GM12878 (cell line): ENCODE measurements at regions of chr11 and their contacts with region 1.

Region 1: DNA sequence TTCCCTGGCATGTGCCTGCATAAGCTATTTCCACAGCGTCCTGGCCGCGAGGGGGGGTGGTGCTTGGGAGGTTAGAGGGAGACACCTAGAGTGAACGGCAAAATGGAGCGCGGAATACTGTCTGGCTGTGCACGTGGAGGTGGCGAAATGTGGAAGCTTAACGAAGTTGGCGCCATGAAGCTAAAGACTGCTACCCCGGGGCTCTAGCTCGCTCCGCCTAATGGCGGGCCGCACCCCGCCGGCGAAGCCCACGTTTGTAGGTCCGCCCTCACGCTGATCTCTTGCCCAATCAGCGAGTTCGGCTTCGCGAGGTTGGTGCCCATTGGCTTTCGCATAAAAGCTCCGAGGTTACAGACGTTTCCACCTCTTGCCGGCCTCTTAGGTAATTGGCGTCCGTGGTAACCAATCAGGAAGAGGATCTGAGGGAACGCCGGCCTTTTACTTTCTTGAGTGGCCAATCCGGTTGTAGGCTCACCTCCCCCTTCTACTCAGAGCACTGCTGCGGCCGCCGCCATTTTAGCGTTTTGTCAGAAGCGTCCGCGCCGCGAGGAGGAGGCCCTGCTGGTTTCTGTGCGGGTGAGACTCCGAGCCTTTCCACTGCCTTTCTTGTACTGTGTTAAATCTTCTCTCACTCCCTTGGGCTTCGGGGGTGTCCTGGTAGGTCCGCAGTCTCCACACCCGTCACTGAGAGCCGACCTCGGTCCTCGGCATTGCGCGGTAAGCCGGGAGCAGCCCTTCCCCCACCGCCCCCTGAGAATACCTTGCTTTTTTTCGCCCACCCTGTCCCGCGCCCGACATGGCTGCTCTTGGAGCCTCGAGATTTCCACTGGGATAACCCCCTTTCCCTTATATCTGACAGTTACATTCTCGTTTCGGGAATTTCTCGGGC is at the start of gene RBM4:
- DNase-seq: peak; percentile 98
- ATAC-seq: peak; percentile 98
- H3K4me3 ChIP-seq: peak within 1 kb of the TSS; percentile 90
- H3K27ac ChIP-seq: peak within 1 kb of the TSS; percentile 92
- H3K4me1 ChIP-seq: peaks cover 17% of the 10 kb centered on the region
- H3K27me3 ChIP-seq: no peaks in the 10 kb centered on the region
- CTCF ChIP-seq: peak in 2 of 3 experiments; percentile 4 to 10; a peak in 1 of 6 replicates
- EP300 ChIP-seq: no peak
- POLR2A ChIP-seq: peak; percentile 93
- RAD21 ChIP-seq: no peak
- polyA plus RNA-seq, gene RBM4: 163 to 224 TPM

Region 2: DNA sequence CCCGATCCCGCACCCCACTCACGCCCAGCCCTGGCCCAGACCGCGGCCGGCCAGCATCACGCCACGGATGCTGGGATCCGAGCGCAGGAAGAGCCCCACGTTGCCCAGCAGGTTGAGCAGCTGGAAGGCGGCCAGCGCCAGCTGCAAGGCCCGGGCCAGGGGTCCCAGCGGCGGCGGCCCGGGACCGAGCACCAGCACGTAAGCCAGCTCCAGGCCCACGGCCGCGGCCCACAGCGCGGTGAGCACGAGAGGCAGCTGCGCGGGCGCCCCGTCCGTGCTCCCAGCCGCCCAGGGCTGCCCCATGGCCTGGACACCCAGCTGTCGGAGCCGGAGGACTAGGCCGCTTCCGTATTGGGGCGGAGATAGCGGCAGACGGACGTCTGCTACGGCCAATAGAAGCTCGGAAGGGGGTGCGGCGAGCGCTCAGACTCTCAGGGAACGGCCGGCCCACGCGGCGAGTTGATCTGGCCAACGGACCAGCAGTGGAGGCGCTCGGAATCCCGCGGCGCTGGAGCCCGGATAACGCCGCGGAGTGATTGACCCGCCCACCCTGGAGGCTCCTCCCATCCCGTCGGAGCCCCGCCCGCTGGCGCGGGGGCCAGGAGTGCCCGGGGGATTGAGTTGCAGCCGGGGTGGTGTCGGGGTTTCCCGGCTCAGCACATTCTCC is 92.6 kb before region 1 on chr11 and contains the start of gene ZDHHC24:
- CTCF ChIA-PET with region 1: interaction called, 4 read pairs
- POLR2A ChIA-PET with region 1: interaction called, 5 read pairs
- RAD21 ChIA-PET with region 1: interaction called, 11 read pairs
- SMC1A ChIA-PET with region 1: interaction called, 7 read pairs
- in situ Hi-C with region 1: no loop called
- intact Hi-C with region 1: no loop called
- DNase-seq: peak; percentile 81
- ATAC-seq: peak; percentile 91
- H3K4me3 ChIP-seq: peak within 1 kb of the TSS; percentile 86
- H3K27ac ChIP-seq: peak within 1 kb of the TSS; percentile 72
- H3K4me1 ChIP-seq: peaks cover 10% of the 10 kb centered on the region
- H3K27me3 ChIP-seq: no peaks in the 10 kb centered on the region
- CTCF ChIP-seq: no peak
- EP300 ChIP-seq: no peak
- POLR2A ChIP-seq: peak; percentile 94
- RAD21 ChIP-seq: no peak
- polyA plus RNA-seq, gene ZDHHC24: 0.86 to 0.89 TPM

Region 3: GRCh38 chr11:66592457-66593302 is 45.7 kb before region 1 on chr11 and contains the starts of genes CCDC87 and CCS:
- CTCF ChIA-PET with region 1: interaction called, 29 read pairs
- POLR2A ChIA-PET with region 1: interaction called, 10 read pairs
- RAD21 ChIA-PET with region 1: interaction called, 6 read pairs
- SMC1A ChIA-PET with region 1: interaction called, 6 read pairs
- in situ Hi-C with region 1: no loop called
- intact Hi-C with region 1: no loop called
- DNase-seq: peak; percentile 84
- ATAC-seq: peak; percentile 98
- H3K4me3 ChIP-seq: peak within 1 kb of the TSS; percentile 85
- H3K27ac ChIP-seq: peak within 1 kb of the TSS; percentile 62
- H3K4me1 ChIP-seq: peaks cover 13% of the 10 kb centered on the region
- H3K27me3 ChIP-seq: no peaks in the 10 kb centered on the region
- CTCF ChIP-seq: peak; percentile 55 to 68 (median 56)
- EP300 ChIP-seq: no peak
- POLR2A ChIP-seq: peak; percentile 100
- RAD21 ChIP-seq: no peak
- polyA plus RNA-seq, gene CCDC87: 0.02 TPM in 1 of 2 experiments, not detected in the other
- polyA plus RNA-seq, gene CCS: 1.5 to 7.6 TPM

Region 4: GRCh38 chr11:66628061-66628603 is 10.3 kb before region 1 on chr11:
- CTCF ChIA-PET with region 1: interaction called, 71 read pairs
- POLR2A ChIA-PET with region 1: interaction called, 105 read pairs
- RAD21 ChIA-PET with region 1: interaction called, 4 read pairs
- SMC1A ChIA-PET with region 1: interaction called, 10 read pairs
- in situ Hi-C with region 1: no loop called
- intact Hi-C with region 1: no loop called
- DNase-seq: no peak
- ATAC-seq: no peak
- H3K4me3 ChIP-seq: no peak overlapping the region
- H3K27ac ChIP-seq: no peak overlapping the region
- H3K4me1 ChIP-seq: no peaks in the 10 kb centered on the region
- H3K27me3 ChIP-seq: no peaks in the 10 kb centered on the region
- CTCF ChIP-seq: no peak
- EP300 ChIP-seq: no peak
- POLR2A ChIP-seq: no peak
- RAD21 ChIP-seq: no peak

Region 5: DNA sequence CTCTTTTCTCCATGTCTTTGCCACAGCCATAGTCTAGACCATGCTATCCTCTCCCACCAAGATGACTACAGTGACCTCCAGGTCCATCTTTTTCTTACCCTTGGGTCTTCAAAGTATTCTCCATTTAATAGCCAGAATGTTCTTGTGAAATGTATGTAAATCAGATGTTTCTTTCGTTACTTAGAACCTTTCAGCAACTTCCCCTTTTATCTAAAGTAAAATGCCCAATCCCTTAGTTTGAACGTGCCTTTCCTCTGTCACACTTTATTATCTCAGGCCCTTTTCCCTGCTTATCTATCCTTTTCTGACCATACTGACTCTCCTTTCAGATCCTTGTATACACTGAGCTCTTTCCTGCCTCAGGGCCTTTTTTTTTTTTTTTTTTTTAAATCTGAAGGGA is 21.3 kb after region 1 on chr11:
- CTCF ChIA-PET with region 1: interaction called, 12 read pairs
- POLR2A ChIA-PET with region 1: interaction called, 5 read pairs
- RAD21 ChIA-PET with region 1: no interaction called
- SMC1A ChIA-PET with region 1: interaction called, 11 read pairs
- in situ Hi-C with region 1: no loop called
- intact Hi-C with region 1: no loop called
- DNase-seq: no peak
- ATAC-seq: peak; percentile 36
- H3K4me3 ChIP-seq: no peak overlapping the region
- H3K27ac ChIP-seq: no peak overlapping the region
- H3K4me1 ChIP-seq: peaks cover 8% of the 10 kb centered on the region; the same call in 1 of the 2 replicates
- H3K27me3 ChIP-seq: no peaks in the 10 kb centered on the region
- CTCF ChIP-seq: no peak
- EP300 ChIP-seq: no peak
- POLR2A ChIP-seq: no peak
- RAD21 ChIP-seq: no peak